Mammary epithelial cell (primary cell): ENCODE measurements at regions of chr7 and their contacts with region 1.

Region 1: GRCh38 chr7:151110941-151111645 is 24.8 kb downstream of the AGAP3 start:
- DNase-seq: peak; percentile 61
- H3K4me3 ChIP-seq: no peak overlapping the region
- H3K27ac ChIP-seq: no peak overlapping the region
- H3K4me1 ChIP-seq: peaks cover 19% of the 10 kb centered on the region
- H3K27me3 ChIP-seq: no peaks in the 10 kb centered on the region
- CTCF ChIP-seq: peak; percentile 75 to 89

Region 2: GRCh38 chr7:150876817-150877526 is 234.1 kb before region 1 on chr7:
- CTCF ChIA-PET with region 1: no interaction called
- dilution Hi-C with region 1: no loop called
- in situ Hi-C with region 1: no loop called
- intact Hi-C with region 1: loop called (anchors 5 kb)
- DNase-seq: peak; percentile 69
- H3K4me3 ChIP-seq: no peak overlapping the region
- H3K27ac ChIP-seq: no peak overlapping the region
- H3K4me1 ChIP-seq: peaks cover 15% of the 10 kb centered on the region
- H3K27me3 ChIP-seq: no peaks in the 10 kb centered on the region
- CTCF ChIP-seq: peak; percentile 58 to 64

Region 3: DNA sequence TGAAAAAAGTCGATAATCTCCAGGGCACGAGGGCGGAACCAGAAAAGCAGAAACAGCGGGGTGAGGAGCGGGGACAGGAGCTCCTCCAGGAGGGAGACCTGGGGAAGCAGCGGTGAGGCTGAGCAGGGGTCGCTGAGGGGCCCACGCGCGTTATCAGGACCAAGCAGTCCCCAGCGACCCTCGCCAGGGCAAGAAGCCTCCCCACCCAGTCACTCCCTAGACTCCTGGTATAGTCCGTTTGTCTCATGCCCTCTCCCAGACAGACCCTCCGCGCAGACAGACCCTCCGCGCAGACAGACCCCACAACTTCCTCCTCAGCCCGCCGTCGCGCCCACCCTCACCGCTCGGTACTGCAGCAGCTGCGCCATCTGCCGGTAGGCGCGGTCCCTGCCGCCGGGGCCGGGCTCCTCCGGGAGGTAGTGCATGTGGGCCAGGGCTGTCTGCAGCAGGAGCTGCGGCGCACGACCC is 93.1 kb before region 1 on chr7:
- CTCF ChIA-PET with region 1: no interaction called
- dilution Hi-C with region 1: no loop called
- in situ Hi-C with region 1: loop called in 1 of 2 experiments (anchors 5 kb)
- intact Hi-C with region 1: no loop called
- DNase-seq: peak; percentile 25
- H3K4me3 ChIP-seq: peak overlapping the region in 1 of 3 experiments; percentile 38
- H3K27ac ChIP-seq: no peak overlapping the region
- H3K4me1 ChIP-seq: peaks cover 28% of the 10 kb centered on the region
- H3K27me3 ChIP-seq: peaks cover 4% of the 10 kb centered on the region
- CTCF ChIP-seq: peak; percentile 75 to 93

Region 4: GRCh38 chr7:151057989-151058780 is 52.9 kb before region 1 on chr7:
- CTCF ChIA-PET with region 1: no interaction called
- dilution Hi-C with region 1: no loop called
- in situ Hi-C with region 1: no loop called
- intact Hi-C with region 1: loop called (anchors 1 kb)
- DNase-seq: peak; percentile 99
- H3K4me3 ChIP-seq: peak overlapping the region; percentile 57 to 74 (median 65)
- H3K27ac ChIP-seq: peak overlapping the region; percentile 88
- H3K4me1 ChIP-seq: peaks cover 49% of the 10 kb centered on the region
- H3K27me3 ChIP-seq: no peaks in the 10 kb centered on the region
- CTCF ChIP-seq: peak in 1 of 2 donors; percentile 12

Region 5: GRCh38 chr7:151123822-151124464 is 12.8 kb after region 1 on chr7:
- CTCF ChIA-PET with region 1: interaction called, 3 read pairs
- dilution Hi-C with region 1: no loop called
- in situ Hi-C with region 1: no loop called
- intact Hi-C with region 1: loop called (anchors 1 kb)
- DNase-seq: peak; percentile 66
- H3K4me3 ChIP-seq: no peak overlapping the region
- H3K27ac ChIP-seq: no peak overlapping the region
- H3K4me1 ChIP-seq: no peaks in the 10 kb centered on the region
- H3K27me3 ChIP-seq: no peaks in the 10 kb centered on the region
- CTCF ChIP-seq: peak; percentile 99

Region 6: DNA sequence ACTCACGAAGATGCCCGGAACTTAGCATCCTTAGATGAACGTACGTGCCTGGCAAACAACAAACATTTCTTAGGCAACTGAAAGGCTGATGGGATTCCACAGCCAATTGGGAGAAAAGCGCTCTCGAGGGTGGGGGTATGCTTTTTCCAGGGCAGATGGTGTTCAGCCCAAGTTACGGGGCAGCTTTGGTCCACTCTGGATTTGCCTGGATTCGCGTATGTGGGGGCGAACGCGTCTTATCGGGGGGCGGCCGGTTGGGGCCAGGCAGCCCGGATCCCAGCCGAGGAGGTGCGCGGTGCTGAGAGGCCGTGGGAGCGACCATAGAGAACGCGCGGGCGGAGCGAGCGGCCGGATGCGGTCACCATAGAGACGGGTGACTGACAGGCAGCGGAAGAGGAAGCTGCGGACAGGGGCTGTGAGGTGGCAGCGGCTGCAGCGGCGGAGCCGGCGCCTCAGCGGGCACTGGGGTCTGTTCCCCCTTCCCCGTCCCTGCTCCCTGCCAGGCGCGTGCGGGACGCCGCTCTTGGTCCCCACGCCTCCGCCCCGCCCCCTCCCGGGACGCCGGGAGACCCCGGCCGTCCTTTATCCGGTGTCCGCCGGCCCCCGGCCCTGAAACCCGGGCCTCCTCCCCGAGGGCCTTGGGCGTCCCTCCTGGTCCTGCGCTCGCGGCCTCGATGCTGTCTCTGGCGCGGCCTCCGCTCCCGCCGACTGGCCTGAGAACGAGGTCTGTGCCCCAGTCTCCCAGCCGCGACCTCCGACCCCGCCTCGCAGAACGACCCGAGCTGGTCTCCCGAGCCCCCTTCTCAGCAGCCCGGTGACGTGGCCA is 121.2 kb after region 1 on chr7 and contains the start of gene CHPF2:
- CTCF ChIA-PET with region 1: no interaction called
- dilution Hi-C with region 1: no loop called
- in situ Hi-C with region 1: no loop called
- intact Hi-C with region 1: loop called (anchors 5 kb)
- DNase-seq: peak; percentile 82
- H3K4me3 ChIP-seq: peak within 1 kb of the TSS; percentile 83 to 98 (median 94)
- H3K27ac ChIP-seq: peak within 1 kb of the TSS; percentile 59
- H3K4me1 ChIP-seq: peaks cover 21% of the 10 kb centered on the region
- H3K27me3 ChIP-seq: no peaks in the 10 kb centered on the region
- CTCF ChIP-seq: no peak
- total RNA-seq, gene CHPF2: 44.0 to 56.3 TPM